T-cell (primary cell): ENCODE measurements at regions of chr6 and their contacts with region 1.

Region 1: DNA sequence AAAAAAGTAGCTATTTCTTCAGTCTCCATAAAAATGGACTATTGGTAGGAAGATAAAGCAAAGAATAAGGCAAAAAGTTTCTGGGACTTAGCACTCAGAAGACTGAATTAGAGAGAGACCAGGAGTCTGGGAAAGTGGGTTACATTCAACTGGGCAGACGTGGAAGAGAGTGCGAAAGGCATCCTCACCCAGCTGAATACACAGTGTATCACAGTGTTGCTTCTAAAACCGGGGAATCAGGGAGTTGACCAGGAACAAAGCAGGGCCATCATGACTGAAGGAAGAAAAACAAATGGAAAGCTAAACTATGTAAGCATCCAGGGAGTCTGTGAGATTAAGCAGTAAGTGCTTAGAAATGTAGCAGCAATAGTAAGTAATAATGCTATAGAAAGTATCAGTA is 452.9 kb upstream of the MAN1A1 start:
- DNase-seq: no peak
- ATAC-seq: no peak
- H3K4me3 ChIP-seq: no peak overlapping the region
- H3K4me3 Mint-ChIP-seq: no peak overlapping the region
- H3K27ac ChIP-seq: no peak overlapping the region
- H3K27ac Mint-ChIP-seq: no peak overlapping the region
- H3K4me1 ChIP-seq: no peaks in the 10 kb centered on the region
- H3K4me1 Mint-ChIP-seq: no peaks in the 10 kb centered on the region
- H3K27me3 ChIP-seq: no peaks in the 10 kb centered on the region
- H3K27me3 Mint-ChIP-seq: no peaks in the 10 kb centered on the region

Region 2: DNA sequence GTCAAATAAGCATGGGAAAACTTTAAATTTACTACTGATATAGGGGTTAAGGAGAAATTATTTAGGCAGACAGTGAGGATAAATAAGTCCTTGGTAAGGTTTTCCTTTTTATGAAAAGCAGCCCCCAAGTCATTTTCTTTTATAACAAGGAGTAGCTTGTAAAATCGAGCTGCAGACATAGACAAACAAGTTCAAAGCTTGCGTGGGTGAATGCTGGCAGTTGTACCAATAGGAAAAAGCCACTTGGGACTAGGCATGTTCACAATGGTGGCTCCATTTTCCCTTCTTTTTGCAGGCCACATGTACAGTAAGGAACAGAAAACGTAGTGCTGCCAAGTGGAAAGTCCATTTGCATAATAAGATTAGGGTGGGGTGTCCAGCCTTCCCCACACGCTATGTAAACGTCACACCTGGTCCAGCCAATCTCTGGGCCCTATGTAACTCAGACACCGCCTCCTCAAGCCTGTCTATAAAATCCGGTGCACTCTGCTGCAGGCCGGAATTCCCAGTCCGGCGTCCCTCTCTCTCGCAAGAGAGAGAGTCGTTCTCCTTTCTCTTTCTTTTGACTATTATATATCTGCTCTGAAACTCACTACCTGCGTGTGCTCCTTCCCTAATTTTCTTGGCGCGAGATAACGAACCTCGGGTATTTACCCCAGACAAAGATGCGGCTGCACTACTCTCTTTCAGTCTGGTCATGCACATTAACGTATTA is 235.8 kb before region 1 on chr6:
- CTCF ChIA-PET with region 1: no interaction called
- POLR2A ChIA-PET with region 1: no interaction called
- DNase-seq: no peak
- ATAC-seq: no peak
- H3K4me3 ChIP-seq: no peak overlapping the region
- H3K4me3 Mint-ChIP-seq: no peak overlapping the region
- H3K27ac ChIP-seq: no peak overlapping the region
- H3K27ac Mint-ChIP-seq: no peak overlapping the region
- H3K4me1 ChIP-seq: no peaks in the 10 kb centered on the region
- H3K4me1 Mint-ChIP-seq: no peaks in the 10 kb centered on the region
- H3K27me3 ChIP-seq: no peaks in the 10 kb centered on the region
- H3K27me3 Mint-ChIP-seq: peaks cover 0 to 13% of the 10 kb centered on the region in 2 donors

Region 3: DNA sequence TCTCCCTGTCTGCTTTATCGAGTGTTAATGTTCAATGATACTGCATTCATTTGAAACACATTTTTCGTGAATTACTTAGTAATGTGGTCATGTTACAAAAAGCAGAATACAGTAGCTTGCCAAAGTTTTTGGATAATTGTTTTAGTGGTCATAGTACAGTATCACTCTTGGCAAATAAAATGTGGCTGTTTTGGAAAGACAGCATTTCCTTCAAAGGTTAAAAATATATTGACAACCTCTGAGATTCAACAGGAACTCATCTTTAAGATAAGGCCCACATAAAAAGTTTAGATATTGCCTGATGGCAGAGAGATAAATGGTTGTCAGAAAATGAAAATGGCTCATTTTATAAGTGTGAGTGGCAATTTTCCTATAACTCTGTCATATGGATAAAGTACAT is 155.2 kb before region 1 on chr6:
- CTCF ChIA-PET with region 1: no interaction called
- POLR2A ChIA-PET with region 1: interaction called in 1 of 2 experiments, 11 read pairs
- DNase-seq: no peak
- ATAC-seq: no peak
- H3K4me3 ChIP-seq: no peak overlapping the region
- H3K4me3 Mint-ChIP-seq: no peak overlapping the region
- H3K27ac ChIP-seq: no peak overlapping the region
- H3K27ac Mint-ChIP-seq: no peak overlapping the region
- H3K4me1 ChIP-seq: peaks cover 0 to under 1% of the 10 kb centered on the region in 2 experiments
- H3K4me1 Mint-ChIP-seq: no peaks in the 10 kb centered on the region
- H3K27me3 ChIP-seq: no peaks in the 10 kb centered on the region
- H3K27me3 Mint-ChIP-seq: no peaks in the 10 kb centered on the region

Region 4: GRCh38 chr6:119791746-119792145 is 10.7 kb before region 1 on chr6:
- CTCF ChIA-PET with region 1: no interaction called
- POLR2A ChIA-PET with region 1: no interaction called
- DNase-seq: no peak
- ATAC-seq: no peak
- H3K4me3 ChIP-seq: no peak overlapping the region
- H3K4me3 Mint-ChIP-seq: no peak overlapping the region
- H3K27ac ChIP-seq: no peak overlapping the region
- H3K27ac Mint-ChIP-seq: no peak overlapping the region
- H3K4me1 ChIP-seq: no peaks in the 10 kb centered on the region
- H3K4me1 Mint-ChIP-seq: no peaks in the 10 kb centered on the region
- H3K27me3 ChIP-seq: no peaks in the 10 kb centered on the region
- H3K27me3 Mint-ChIP-seq: no peaks in the 10 kb centered on the region